ENCODE measurements at regions of chr2 and their contacts with region 1.

Region 1: DNA sequence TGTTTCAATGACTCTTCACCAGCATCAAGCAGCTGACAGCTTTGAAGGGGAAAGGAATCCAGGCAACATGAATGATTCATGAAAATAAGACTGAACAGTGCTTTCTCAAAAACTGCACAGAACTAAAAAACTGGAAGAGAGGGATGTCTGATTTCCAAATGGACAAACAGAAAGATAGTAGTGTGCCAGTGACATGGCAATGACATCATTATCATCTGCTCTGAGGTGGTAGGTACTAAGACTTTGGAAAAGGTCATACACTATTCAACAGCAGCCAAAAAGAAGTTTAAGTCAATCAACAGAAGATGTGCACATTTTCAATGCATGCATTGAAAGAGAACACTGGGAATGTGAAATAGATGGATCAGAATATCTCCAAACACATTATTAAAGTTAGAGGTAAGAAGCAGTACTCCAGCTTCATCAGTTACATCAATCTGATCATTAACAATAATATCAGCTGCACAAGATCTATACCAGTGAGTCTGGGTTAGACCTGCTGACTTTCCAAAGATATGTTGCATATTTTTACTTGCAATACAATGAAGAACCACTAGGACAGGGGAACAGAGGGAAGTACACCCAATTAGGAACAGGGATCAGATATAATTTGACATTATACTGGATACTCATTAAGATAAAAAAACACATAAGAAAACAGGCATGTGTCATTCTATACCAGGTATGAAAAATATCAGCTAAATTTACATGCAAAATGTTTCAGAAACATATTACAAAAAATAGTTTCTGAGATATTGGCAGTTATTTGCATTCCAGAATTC is 995.3 kb upstream of the DDX18 start:
- DNase-seq: no peak
- H3K4me3 ChIP-seq: no peak overlapping the region
- H3K27ac ChIP-seq: no peak overlapping the region
- H3K4me1 ChIP-seq: no peaks in the 10 kb centered on the region
- H3K27me3 ChIP-seq: no peaks in the 10 kb centered on the region
- CTCF ChIP-seq: peak; percentile 35

Region 2: GRCh38 chr2:115161081-115161770 is 1657.9 kb before region 1 on chr2:
- CTCF ChIA-PET with region 1: no interaction called
- POLR2A ChIA-PET with region 1: no interaction called
- intact Hi-C with region 1: loop called (anchors 10 kb)
- DNase-seq: no peak
- H3K4me3 ChIP-seq: no peak overlapping the region
- H3K27ac ChIP-seq: no peak overlapping the region
- H3K4me1 ChIP-seq: no peaks in the 10 kb centered on the region
- H3K27me3 ChIP-seq: no peaks in the 10 kb centered on the region
- CTCF ChIP-seq: no peak

Region 3: GRCh38 chr2:116074161-116074560 is 745.0 kb before region 1 on chr2:
- CTCF ChIA-PET with region 1: no interaction called
- POLR2A ChIA-PET with region 1: no interaction called
- intact Hi-C with region 1: no loop called
- DNase-seq: no peak
- H3K4me3 ChIP-seq: no peak overlapping the region
- H3K27ac ChIP-seq: no peak overlapping the region
- H3K4me1 ChIP-seq: no peaks in the 10 kb centered on the region
- H3K27me3 ChIP-seq: no peaks in the 10 kb centered on the region
- CTCF ChIP-seq: no peak

Region 4: DNA sequence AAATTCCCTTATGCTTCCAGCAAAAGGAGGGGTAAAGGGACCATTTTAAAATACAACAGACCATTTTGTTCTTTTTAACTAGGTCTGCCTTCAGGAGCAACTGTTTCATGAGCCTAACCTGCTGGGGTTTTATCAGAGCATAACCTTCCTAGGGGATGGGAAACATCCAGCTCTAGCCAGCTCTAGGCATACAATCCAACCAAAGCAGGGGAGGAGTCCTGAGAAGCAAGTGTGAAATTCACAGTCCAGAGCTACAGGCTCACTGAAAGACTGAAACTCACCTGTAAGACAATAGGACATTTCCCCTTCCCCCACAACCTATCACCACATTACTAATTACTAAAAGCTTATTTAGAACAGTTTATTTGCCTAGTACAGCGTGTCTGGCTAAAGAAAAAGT is 301.2 kb before region 1 on chr2:
- CTCF ChIA-PET with region 1: no interaction called
- POLR2A ChIA-PET with region 1: no interaction called
- intact Hi-C with region 1: no loop called
- DNase-seq: no peak
- H3K4me3 ChIP-seq: no peak overlapping the region
- H3K27ac ChIP-seq: no peak overlapping the region
- H3K4me1 ChIP-seq: no peaks in the 10 kb centered on the region
- H3K27me3 ChIP-seq: no peaks in the 10 kb centered on the region
- CTCF ChIP-seq: no peak

Region 5: DNA sequence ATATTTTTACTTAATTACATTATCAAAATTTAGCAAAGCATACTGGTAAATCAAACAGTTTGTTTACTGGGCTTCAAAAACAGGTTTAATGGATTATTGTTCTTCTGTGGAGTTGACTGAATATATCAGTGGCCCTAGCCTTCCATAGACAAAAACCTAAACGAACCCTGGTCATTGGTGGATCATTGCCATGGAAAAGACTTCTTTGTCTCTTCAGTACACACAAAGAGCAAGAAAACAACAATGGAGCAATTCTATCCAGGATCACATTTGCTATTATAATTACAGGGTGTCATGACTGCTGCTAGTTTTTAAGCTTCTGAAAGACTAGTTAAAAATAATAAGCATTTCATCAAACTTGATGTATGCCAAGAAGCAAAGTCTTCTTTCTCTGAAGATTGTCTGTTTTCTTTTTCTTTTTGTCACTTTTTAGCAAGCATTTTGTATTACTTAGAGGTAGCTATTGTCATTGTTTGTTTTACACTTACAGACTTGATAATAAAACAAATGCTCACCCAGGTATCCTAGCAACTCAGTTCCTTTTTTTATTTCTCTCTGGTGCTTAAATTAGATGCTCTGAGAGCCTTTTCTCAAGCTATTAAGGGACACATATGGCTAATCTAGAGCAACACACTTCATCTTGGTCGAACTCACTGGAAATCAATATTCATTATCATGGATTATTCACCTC is 233.4 kb before region 1 on chr2:
- CTCF ChIA-PET with region 1: no interaction called
- POLR2A ChIA-PET with region 1: interaction called, 22 read pairs
- intact Hi-C with region 1: no loop called
- DNase-seq: no peak
- H3K4me3 ChIP-seq: no peak overlapping the region
- H3K27ac ChIP-seq: no peak overlapping the region
- H3K4me1 ChIP-seq: no peaks in the 10 kb centered on the region
- H3K27me3 ChIP-seq: no peaks in the 10 kb centered on the region
- CTCF ChIP-seq: no peak

Region 6: DNA sequence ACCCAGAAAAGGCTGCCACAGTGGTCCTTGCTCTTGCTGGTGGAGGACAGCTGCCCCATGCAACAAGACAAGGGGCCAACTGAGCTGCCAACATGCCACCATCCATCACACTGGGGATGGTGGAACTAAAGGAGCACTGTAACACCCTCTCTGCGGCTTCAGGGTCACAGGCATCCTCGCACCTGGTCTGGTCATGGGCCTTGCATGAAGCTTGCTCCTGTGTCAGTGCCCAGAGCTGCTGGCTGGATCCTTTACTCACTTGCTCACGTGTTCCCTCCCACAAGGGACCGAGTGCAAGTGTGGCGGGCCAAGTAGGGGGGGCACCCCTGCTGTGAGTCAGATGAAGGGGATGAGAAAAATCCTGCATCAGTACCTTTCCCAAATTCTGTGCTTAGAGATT is 23.0 kb after region 1 on chr2:
- CTCF ChIA-PET with region 1: no interaction called
- POLR2A ChIA-PET with region 1: no interaction called
- intact Hi-C with region 1: no loop called
- DNase-seq: no peak
- H3K4me3 ChIP-seq: no peak overlapping the region
- H3K27ac ChIP-seq: no peak overlapping the region
- H3K4me1 ChIP-seq: no peaks in the 10 kb centered on the region
- H3K27me3 ChIP-seq: no peaks in the 10 kb centered on the region
- CTCF ChIP-seq: no peak

Measured in PC-9 (cell line).